HCT116 (cell line): ENCODE measurements at regions of chr6 and their contacts with region 1.

Region 1: GRCh38 chr6:32971581-32972352 is 3.4 kb downstream of the BRD2 start:
- DNase-seq: peak; percentile 100
- ATAC-seq: peak; percentile 57
- H3K4me3 ChIP-seq: peak overlapping the region; percentile 82 to 95
- H3K27ac ChIP-seq: peak overlapping the region; percentile 97
- H3K4me1 ChIP-seq: peaks cover 11 to 60% of the 10 kb centered on the region in 2 experiments
- H3K27me3 ChIP-seq: no peaks in the 10 kb centered on the region
- CTCF ChIP-seq: no peak
- POLR2A ChIP-seq: peak; percentile 98
- RAD21 ChIP-seq: no peak

Region 2: DNA sequence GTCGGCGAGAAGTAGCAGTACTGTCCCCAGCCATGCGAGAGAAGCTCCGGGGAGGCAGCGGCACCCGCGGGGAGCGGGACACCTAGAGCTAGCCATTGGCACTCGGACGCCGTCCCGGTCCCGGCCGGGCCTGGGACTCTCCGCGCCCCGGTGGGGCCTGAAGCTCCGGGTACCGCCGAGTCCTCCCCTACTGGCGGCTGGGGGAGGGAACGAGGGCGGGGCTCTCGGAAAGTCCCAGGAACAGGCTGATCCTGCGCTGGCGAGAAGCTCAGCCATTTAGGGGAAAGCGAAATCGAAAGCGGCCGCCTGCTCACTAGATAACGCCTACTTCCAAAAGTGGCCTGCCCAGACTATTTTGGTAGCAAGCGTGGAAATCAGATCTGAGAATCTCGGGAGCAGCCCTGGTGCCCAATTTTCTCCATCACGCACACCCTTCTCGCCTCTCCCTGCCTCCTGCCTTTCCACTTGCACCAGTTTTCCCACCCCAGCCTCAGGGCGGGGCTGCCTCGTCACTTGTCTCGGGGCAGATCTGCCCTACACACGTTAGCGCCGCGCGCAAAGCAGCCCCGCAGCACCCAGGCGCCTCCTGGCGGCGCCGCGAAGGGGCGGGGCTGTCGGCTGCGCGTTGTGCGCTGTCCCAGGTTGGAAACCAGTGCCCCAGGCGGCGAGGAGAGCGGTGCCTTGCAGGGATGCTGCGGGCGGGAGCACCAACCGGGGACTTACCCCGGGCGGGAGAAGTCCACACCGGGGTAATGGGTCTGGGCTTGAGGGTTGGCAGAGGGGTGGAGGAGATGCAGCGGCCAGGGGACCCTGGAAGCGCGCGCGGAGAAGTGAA is 118.0 kb before region 1 on chr6 and contains the starts of genes PSMB9 and TAP1:
- CTCF ChIA-PET with region 1: interaction called, 4 read pairs
- POLR2A ChIA-PET with region 1: interaction called, 25 read pairs
- RAD21 ChIA-PET with region 1: no interaction called
- intact Hi-C with region 1: no loop called
- DNase-seq: peak; percentile 88
- ATAC-seq: peak; percentile 93
- H3K4me3 ChIP-seq: peak within 1 kb of the TSS; percentile 88 to 95
- H3K27ac ChIP-seq: peak within 1 kb of the TSS; percentile 84
- H3K4me1 ChIP-seq: peaks cover 8 to 17% of the 10 kb centered on the region in 2 experiments; a peak in 3 of 4 replicates
- H3K27me3 ChIP-seq: no peaks in the 10 kb centered on the region
- CTCF ChIP-seq: peak; percentile 64 to 93 (median 81)
- POLR2A ChIP-seq: peak; percentile 42
- RAD21 ChIP-seq: peak; percentile 76
- total RNA-seq, gene PSMB9: 8.1 TPM
- total RNA-seq, gene TAP1: 32.2 TPM

Region 3: GRCh38 chr6:32885698-32886286 is 86.0 kb before region 1 on chr6:
- CTCF ChIA-PET with region 1: interaction called, 4 read pairs
- POLR2A ChIA-PET with region 1: interaction called, 19 read pairs
- RAD21 ChIA-PET with region 1: no interaction called
- intact Hi-C with region 1: loop called (anchors 5 kb)
- DNase-seq: peak; percentile 72
- ATAC-seq: peak; percentile 80
- H3K4me3 ChIP-seq: no peak overlapping the region
- H3K27ac ChIP-seq: no peak overlapping the region
- H3K4me1 ChIP-seq: peaks cover 0 to 7% of the 10 kb centered on the region in 2 experiments; a peak in 2 of 4 replicates
- H3K27me3 ChIP-seq: no peaks in the 10 kb centered on the region
- CTCF ChIP-seq: peak; percentile 33 to 80 (median 64)
- POLR2A ChIP-seq: no peak
- RAD21 ChIP-seq: peak; percentile 86

Region 4: DNA sequence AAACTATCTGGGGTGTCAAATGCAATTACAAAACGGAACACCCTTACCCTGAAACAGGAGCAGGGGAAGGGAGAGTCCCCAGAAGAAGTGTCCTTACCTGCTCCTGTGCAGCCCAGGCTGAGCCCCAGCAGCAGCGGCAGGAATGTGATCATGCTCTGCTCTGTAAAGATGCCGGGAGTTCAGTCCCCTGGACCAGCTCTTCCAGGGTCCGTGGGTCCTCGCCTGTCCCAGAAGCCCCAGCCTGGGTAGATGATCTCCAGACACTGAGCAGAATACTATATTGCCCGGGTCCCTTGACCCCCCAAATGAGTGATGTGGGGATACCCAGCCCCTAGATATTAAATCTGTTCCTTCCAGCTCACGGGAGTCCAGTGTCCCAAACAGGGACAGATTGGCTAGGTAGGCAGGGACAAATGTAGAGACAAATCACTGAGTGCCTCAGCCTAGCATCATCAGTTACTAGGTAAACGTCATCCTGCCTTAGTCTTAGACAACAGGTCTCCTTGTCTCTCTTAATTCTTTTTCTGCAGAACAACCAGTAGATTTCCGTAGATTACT is 31.0 kb before region 1 on chr6 and contains the start of gene HLA-DMB:
- CTCF ChIA-PET with region 1: no interaction called
- POLR2A ChIA-PET with region 1: interaction called, 52 read pairs
- RAD21 ChIA-PET with region 1: no interaction called
- intact Hi-C with region 1: no loop called
- DNase-seq: peak; percentile 75
- ATAC-seq: peak; percentile 100
- H3K4me3 ChIP-seq: peak within 1 kb of the TSS; percentile 30 to 41
- H3K27ac ChIP-seq: no peak within 1 kb of the TSS
- H3K4me1 ChIP-seq: peaks cover 4 to 12% of the 10 kb centered on the region in 2 experiments; a peak in 2 of 4 replicates
- H3K27me3 ChIP-seq: no peaks in the 10 kb centered on the region
- CTCF ChIP-seq: no peak
- POLR2A ChIP-seq: no peak
- RAD21 ChIP-seq: no peak
- total RNA-seq, gene HLA-DMB: 3.3 TPM

Region 5: GRCh38 chr6:33120001-33120400 is 148.2 kb after region 1 on chr6:
- CTCF ChIA-PET with region 1: no interaction called
- POLR2A ChIA-PET with region 1: no interaction called
- RAD21 ChIA-PET with region 1: no interaction called
- intact Hi-C with region 1: no loop called
- DNase-seq: no peak
- ATAC-seq: no peak
- H3K4me3 ChIP-seq: no peak overlapping the region
- H3K27ac ChIP-seq: no peak overlapping the region
- H3K4me1 ChIP-seq: peaks cover 0 to 8% of the 10 kb centered on the region in 2 experiments; a peak in 1 of 4 replicates
- H3K27me3 ChIP-seq: peaks cover 4% of the 10 kb centered on the region; the same call in 1 of the 2 replicates
- CTCF ChIP-seq: no peak
- POLR2A ChIP-seq: no peak
- RAD21 ChIP-seq: no peak

Region 6: GRCh38 chr6:33248925-33249731 is 277.4 kb after region 1 on chr6:
- CTCF ChIA-PET with region 1: no interaction called
- POLR2A ChIA-PET with region 1: interaction called, 16 read pairs
- RAD21 ChIA-PET with region 1: no interaction called
- intact Hi-C with region 1: no loop called
- DNase-seq: peak; percentile 99
- ATAC-seq: peak; percentile 91
- H3K4me3 ChIP-seq: peak overlapping the region; percentile 74 to 85
- H3K27ac ChIP-seq: peak overlapping the region; percentile 90
- H3K4me1 ChIP-seq: peaks cover 16 to 37% of the 10 kb centered on the region in 2 experiments
- H3K27me3 ChIP-seq: no peaks in the 10 kb centered on the region
- CTCF ChIP-seq: no peak
- POLR2A ChIP-seq: peak; percentile 65
- RAD21 ChIP-seq: no peak